Activated CD4-positive, alpha-beta T cell treated with anti-CD3 and anti-CD28 coated beads, Interleukin-2, amount 10 ng/mL, durations not matched to agents 24 days and 14 days (primary cell): ENCODE measurements at regions of chr10 and their contacts with region 1.

Region 1: GRCh38 chr10:17023386-17024298 is 106.0 kb downstream of the CUBN start:
- DNase-seq: peak; percentile 94
- H3K4me3 Mint-ChIP-seq: peak overlapping the region; percentile 59
- H3K27ac Mint-ChIP-seq: peak overlapping the region; percentile 94
- H3K4me1 Mint-ChIP-seq: peaks cover 39% of the 10 kb centered on the region
- H3K27me3 Mint-ChIP-seq: peaks cover 5% of the 10 kb centered on the region

Region 2: DNA sequence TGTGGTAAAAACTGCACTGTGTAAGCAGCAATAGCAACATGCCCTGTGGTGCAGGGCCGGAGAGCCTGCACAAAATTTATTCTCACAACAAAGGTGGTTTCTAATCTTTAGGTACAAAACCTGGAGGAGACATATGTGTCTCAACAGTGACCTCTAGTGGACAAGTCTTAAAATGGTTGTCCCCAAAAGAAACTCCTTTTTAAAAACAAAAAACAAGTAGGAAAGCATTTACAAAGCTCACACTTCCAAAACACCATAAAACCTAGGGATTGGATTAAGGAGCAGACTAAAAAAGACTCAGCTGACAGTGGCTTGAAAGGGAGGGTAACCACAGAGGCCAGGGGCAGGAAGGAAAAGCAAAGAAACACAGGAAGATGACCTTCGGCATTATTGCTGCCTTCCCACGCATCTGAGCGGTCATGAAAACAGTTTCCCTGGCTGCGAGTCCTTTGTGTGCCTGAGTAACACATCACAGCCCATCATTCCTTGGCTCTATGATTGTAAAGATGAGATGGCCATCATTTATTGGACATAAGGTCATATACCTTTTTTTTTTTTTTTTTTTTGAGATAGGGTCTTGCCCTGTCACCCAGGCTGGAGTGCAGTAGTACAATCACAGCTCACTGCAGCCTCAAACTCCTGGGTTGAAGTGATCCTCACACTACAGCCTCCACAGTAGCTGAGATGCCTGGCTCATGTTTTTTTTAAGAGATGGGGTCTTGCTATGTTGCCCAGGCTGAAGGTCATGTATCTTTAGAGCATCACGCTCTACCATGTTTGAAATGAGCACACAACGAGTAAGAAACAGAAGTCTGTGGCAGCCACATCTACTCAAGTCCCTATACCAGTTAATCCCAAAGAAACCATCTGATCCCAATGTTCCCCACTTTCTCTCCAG is 245.9 kb before region 1 on chr10:
- intact Hi-C with region 1: loop called (anchors 1 kb)
- DNase-seq: peak; percentile 74
- H3K4me3 Mint-ChIP-seq: no peak overlapping the region
- H3K27ac Mint-ChIP-seq: peak overlapping the region; percentile 62
- H3K4me1 Mint-ChIP-seq: peaks cover 22% of the 10 kb centered on the region
- H3K27me3 Mint-ChIP-seq: no peaks in the 10 kb centered on the region

Region 3: GRCh38 chr10:16965740-16966447 is 57.7 kb before region 1 on chr10:
- intact Hi-C with region 1: loop called (anchors 2 kb)
- DNase-seq: no peak
- H3K4me3 Mint-ChIP-seq: no peak overlapping the region
- H3K27ac Mint-ChIP-seq: no peak overlapping the region
- H3K4me1 Mint-ChIP-seq: peaks cover 20% of the 10 kb centered on the region
- H3K27me3 Mint-ChIP-seq: peaks cover 12% of the 10 kb centered on the region

Region 4: GRCh38 chr10:17144757-17145156 is 121.1 kb after region 1 on chr10:
- intact Hi-C with region 1: loop called (anchors 1 kb)
- DNase-seq: peak; percentile 85
- H3K4me3 Mint-ChIP-seq: no peak overlapping the region
- H3K27ac Mint-ChIP-seq: peak overlapping the region; percentile 61
- H3K4me1 Mint-ChIP-seq: peaks cover 23% of the 10 kb centered on the region
- H3K27me3 Mint-ChIP-seq: peaks cover 5% of the 10 kb centered on the region

Region 5: GRCh38 chr10:17228091-17228940 is 204.7 kb after region 1 on chr10 and contains the start of gene VIM:
- intact Hi-C with region 1: loop called (anchors 1 kb)
- DNase-seq: peak; percentile 94
- H3K4me3 Mint-ChIP-seq: peak within 1 kb of the TSS; percentile 96
- H3K27ac Mint-ChIP-seq: peak within 1 kb of the TSS; percentile 95
- H3K4me1 Mint-ChIP-seq: peaks cover 44% of the 10 kb centered on the region
- H3K27me3 Mint-ChIP-seq: peaks cover 2% of the 10 kb centered on the region
- total RNA-seq, gene VIM: 178 and 182 TPM in 2 replicates

Region 6: DNA sequence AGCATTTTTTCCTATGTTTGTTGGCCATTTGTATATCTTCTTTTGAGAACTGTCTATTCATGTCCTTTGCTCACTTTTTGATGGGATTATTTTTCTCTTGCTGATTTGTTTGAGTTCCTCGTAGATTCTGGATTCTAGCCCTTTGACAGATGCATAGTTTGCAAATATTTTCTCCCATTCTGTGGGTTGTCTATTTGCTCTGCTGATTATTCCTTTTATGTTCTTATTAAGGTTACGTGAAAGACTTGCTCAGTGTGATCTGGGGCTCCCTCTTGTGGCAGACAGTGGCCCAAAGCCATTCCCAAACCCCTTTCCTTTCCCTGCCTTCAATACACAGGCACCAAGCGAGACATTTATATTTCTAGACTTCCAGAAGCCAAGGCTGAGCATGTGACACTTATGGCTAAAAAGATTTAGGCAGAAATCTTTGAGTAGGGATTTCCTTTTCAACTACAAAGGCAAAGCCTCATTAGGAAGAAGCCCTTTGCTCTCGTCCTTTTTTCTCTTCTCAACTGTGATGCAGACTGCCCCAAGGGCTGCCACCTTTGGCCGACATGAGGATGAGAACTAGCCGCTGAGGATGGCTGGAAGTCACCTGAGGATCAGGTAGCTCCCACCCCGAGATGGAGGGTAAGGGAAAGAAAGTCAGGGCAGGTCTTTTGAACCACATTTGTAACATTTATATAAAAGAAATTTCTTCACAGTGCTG is 407.2 kb after region 1 on chr10:
- intact Hi-C with region 1: loop called (anchors 10 kb)
- DNase-seq: peak; percentile 87
- H3K4me3 Mint-ChIP-seq: no peak overlapping the region
- H3K27ac Mint-ChIP-seq: no peak overlapping the region
- H3K4me1 Mint-ChIP-seq: peaks cover 51% of the 10 kb centered on the region
- H3K27me3 Mint-ChIP-seq: peaks cover 18% of the 10 kb centered on the region